ENCODE measurements at regions of chr4 and their contacts with region 1.

Region 1: GRCh38 chr4:86921608-86922252 is 13.1 kb upstream of the AFF1 start:
- DNase-seq: no peak
- H3K4me3 ChIP-seq: no peak overlapping the region
- H3K27ac ChIP-seq: no peak overlapping the region
- H3K27me3 ChIP-seq: no peaks in the 10 kb centered on the region
- CTCF ChIP-seq: no peak

Region 2: DNA sequence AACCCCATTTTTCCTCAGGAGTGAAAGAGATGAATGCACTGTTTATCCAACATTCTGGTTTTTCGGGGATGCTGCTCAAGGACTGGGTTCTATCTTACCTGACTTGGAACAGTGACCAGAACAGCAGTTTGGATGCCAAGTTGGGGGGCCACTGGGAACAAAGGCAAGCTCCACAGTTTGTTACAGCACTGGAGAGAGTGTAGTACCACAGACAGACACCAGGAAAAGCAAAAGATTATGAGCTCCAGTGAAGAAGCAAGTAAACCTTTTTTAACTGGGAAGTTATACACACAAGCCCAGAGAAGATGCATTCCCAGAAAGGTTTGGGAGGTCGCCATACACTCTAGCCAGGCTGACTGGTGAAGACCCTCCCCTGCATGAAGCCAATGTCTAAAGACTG is 43.1 kb before region 1 on chr4:
- CTCF ChIA-PET with region 1: no interaction called
- POLR2A ChIA-PET with region 1: no interaction called
- DNase-seq: no peak
- H3K4me3 ChIP-seq: no peak overlapping the region
- H3K27ac ChIP-seq: no peak overlapping the region
- H3K27me3 ChIP-seq: no peaks in the 10 kb centered on the region
- CTCF ChIP-seq: no peak

Region 3: GRCh38 chr4:86908251-86908657 is 13.5 kb before region 1 on chr4:
- CTCF ChIA-PET with region 1: interaction called, 39 read pairs
- POLR2A ChIA-PET with region 1: interaction called, 3 read pairs
- DNase-seq: no peak
- H3K4me3 ChIP-seq: peak overlapping the region; percentile 11
- H3K27ac ChIP-seq: peak overlapping the region; percentile 42
- H3K27me3 ChIP-seq: no peaks in the 10 kb centered on the region
- CTCF ChIP-seq: no peak

Region 4: GRCh38 chr4:86999136-86999643 is 77.5 kb after region 1 on chr4:
- CTCF ChIA-PET with region 1: interaction called, 62 read pairs
- POLR2A ChIA-PET with region 1: no interaction called
- DNase-seq: no peak
- H3K4me3 ChIP-seq: no peak overlapping the region
- H3K27ac ChIP-seq: no peak overlapping the region
- H3K27me3 ChIP-seq: no peaks in the 10 kb centered on the region
- CTCF ChIP-seq: no peak

Region 5: DNA sequence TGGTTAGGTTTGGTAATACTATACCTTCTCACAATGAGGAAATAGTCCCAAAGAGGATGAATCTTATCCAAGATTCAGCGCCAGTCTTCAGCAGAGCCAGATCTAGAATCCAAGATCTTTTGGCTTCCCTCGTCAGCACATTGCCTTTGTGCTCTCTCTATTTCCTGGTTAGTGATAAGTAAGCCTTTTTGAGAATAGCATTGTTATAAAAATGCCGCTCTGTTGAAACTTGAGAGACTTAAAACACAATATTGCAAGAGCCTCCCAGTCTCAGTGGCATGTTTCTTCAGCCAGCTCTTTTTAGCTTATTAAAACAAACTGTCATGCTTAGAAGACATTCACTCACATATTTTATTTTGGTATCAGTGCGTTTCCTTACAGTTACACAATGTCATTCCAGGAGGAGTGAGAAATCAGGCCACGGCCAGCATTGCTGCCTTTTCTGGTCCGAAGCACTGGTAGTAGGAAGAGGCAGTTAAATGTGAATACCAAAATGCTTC is 157.3 kb after region 1 on chr4:
- CTCF ChIA-PET with region 1: interaction called, 11 read pairs
- POLR2A ChIA-PET with region 1: no interaction called
- DNase-seq: peak; percentile 51
- H3K4me3 ChIP-seq: no peak overlapping the region; the same call in 1 of the 2 replicates
- H3K27ac ChIP-seq: peak overlapping the region; percentile 42
- H3K27me3 ChIP-seq: no peaks in the 10 kb centered on the region
- CTCF ChIP-seq: no peak

Region 6: GRCh38 chr4:87118826-87119225 is 197.1 kb after region 1 on chr4:
- CTCF ChIA-PET with region 1: interaction called, 12 read pairs
- POLR2A ChIA-PET with region 1: no interaction called
- DNase-seq: peak; percentile 76
- H3K4me3 ChIP-seq: no peak overlapping the region
- H3K27ac ChIP-seq: peak overlapping the region; percentile 80
- H3K27me3 ChIP-seq: no peaks in the 10 kb centered on the region
- CTCF ChIP-seq: no peak

Region 7: DNA sequence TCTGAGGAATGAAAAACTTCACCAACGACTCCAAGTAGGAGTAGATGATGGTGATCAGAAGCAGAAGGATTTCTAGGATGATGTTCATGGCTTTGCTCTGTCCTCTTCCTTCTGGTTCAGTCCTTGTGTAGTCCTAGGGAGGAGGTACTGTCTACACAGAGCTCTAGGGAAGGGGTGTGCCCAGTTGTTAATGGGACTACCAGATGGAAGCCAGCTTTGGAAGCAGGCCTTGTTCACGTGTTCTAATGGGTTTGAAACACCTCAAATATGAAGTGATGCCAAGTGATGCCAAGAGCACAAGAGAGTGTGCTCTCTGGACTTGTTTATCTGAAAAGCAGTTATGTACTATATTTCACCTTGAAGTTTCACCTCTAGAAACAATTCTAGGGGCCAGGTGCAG is 401.0 kb after region 1 on chr4 and contains the start of gene HSD17B13:
- CTCF ChIA-PET with region 1: no interaction called
- POLR2A ChIA-PET with region 1: no interaction called
- DNase-seq: no peak
- H3K4me3 ChIP-seq: no peak within 1 kb of the TSS
- H3K27ac ChIP-seq: no peak within 1 kb of the TSS
- H3K27me3 ChIP-seq: peaks cover 2% of the 10 kb centered on the region
- CTCF ChIP-seq: no peak
- polyA plus RNA-seq, gene HSD17B13: 0.09 TPM in 1 of 2 replicates, not detected in the other

Measured in AG04450 (cell line).